T-cell (primary cell): ENCODE measurements at regions of chr15 and their contacts with region 1.

Region 1: DNA sequence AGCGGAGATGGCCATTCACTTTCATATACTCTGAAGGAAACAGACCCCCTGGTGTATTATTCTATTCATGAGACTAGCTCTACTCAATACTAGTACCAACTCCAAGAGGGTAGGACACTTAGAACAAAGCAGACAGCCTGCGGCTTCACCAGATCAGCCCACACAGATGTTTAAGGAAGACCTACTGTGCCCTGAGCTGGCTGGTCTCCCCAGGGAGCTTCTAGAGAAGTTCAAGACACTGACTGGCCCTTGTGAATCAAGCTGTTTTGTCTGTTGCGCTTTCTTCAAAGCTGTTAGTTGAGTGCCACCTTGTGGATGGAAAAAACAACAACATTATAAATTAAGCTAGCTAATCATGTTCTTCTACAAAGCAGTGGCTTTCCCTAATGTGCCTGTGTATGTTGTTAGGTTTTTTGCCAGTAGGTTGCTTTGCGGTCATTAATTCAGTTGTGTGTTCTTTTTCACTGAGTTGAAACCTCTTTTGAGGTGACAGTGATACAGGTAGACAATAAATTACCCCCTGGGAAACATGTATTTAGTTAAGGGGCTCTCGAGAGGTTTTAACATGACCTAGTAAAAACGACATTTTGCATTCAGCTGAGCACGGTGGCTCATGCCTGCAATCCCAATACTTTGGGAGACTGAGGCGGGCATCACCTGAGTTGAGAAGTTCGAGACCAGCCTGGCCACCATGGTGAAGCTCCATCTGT is 64.2 kb upstream of the MYZAP start:
- DNase-seq: peak in 4 of 35 experiments; percentile 5 to 58 (median 10)
- ATAC-seq: no peak
- H3K4me3 ChIP-seq: no peak overlapping the region
- H3K4me3 Mint-ChIP-seq: no peak overlapping the region
- H3K27ac ChIP-seq: no peak overlapping the region
- H3K27ac Mint-ChIP-seq: no peak overlapping the region
- H3K4me1 ChIP-seq: no peaks in the 10 kb centered on the region
- H3K4me1 Mint-ChIP-seq: no peaks in the 10 kb centered on the region
- H3K27me3 ChIP-seq: peaks cover 0 to 15% of the 10 kb centered on the region in 2 experiments
- H3K27me3 Mint-ChIP-seq: peaks cover 5 to 15% of the 10 kb centered on the region in 2 donors

Region 2: GRCh38 chr15:56496635-56497034 is 1030.9 kb before region 1 on chr15:
- CTCF ChIA-PET with region 1: interaction called, 4 to 14 read pairs
- POLR2A ChIA-PET with region 1: no interaction called
- DNase-seq: peak in 2 of 35 experiments; percentile 12 to 66
- ATAC-seq: peak in 3 of 4 experiments; percentile 44 to 55 (median 45)
- H3K4me3 ChIP-seq: no peak overlapping the region
- H3K4me3 Mint-ChIP-seq: no peak overlapping the region
- H3K27ac ChIP-seq: no peak overlapping the region
- H3K27ac Mint-ChIP-seq: no peak overlapping the region
- H3K4me1 ChIP-seq: no peaks in the 10 kb centered on the region
- H3K4me1 Mint-ChIP-seq: peaks cover 0 to 3% (median 2%) of the 10 kb centered on the region in 3 donors
- H3K27me3 ChIP-seq: peaks cover 0 to 7% of the 10 kb centered on the region in 2 experiments
- H3K27me3 Mint-ChIP-seq: peaks cover 3 to 15% of the 10 kb centered on the region in 2 donors

Region 3: GRCh38 chr15:56719774-56720555 is 807.6 kb before region 1 on chr15:
- CTCF ChIA-PET with region 1: interaction called in 1 of 2 experiments, 10 read pairs
- POLR2A ChIA-PET with region 1: no interaction called
- DNase-seq: no peak
- ATAC-seq: no peak
- H3K4me3 ChIP-seq: no peak overlapping the region
- H3K4me3 Mint-ChIP-seq: peak overlapping the region in 1 of 3 donors; percentile 19
- H3K27ac ChIP-seq: no peak overlapping the region
- H3K27ac Mint-ChIP-seq: no peak overlapping the region
- H3K4me1 ChIP-seq: peaks cover 0 to 22% of the 10 kb centered on the region in 2 experiments
- H3K4me1 Mint-ChIP-seq: peaks cover 66 to 68% (median 67%) of the 10 kb centered on the region in 3 donors
- H3K27me3 ChIP-seq: no peaks in the 10 kb centered on the region
- H3K27me3 Mint-ChIP-seq: no peaks in the 10 kb centered on the region

Region 4: DNA sequence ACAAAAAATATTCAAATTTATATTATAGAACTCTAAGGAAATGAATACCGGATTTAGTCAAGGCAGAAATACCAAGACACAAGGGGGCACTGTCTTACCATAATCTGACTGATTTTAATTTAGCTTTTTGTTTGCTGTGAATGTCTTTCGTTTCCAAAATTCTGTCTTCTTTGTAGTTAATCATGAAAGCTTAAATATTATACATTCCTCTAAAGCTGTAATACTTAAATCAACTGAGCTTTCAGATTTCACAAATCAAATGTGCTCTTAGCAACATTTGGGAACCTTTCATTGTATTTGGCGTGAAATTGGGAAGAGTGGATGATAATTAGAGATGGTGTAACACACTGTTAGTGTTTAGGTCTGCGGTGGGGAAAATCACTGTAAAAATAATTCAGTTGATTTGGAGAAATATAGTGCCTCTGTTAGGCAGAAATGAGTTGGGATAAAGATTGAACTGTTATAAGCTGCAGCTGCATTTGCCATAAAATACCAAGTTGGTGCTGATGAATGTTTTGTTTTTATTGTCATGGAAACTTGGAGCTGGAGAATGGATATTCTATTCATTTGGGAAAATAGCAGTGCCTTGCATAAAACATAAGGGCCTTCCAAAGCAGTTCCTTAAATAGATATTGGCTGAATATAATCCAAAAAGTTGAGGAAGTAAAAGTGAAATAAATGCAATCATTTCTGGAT is 380.9 kb before region 1 on chr15:
- CTCF ChIA-PET with region 1: interaction called in 1 of 2 experiments, 10 read pairs
- POLR2A ChIA-PET with region 1: no interaction called
- DNase-seq: peak in 1 of 35 experiments; percentile 50
- ATAC-seq: no peak
- H3K4me3 ChIP-seq: no peak overlapping the region
- H3K4me3 Mint-ChIP-seq: no peak overlapping the region
- H3K27ac ChIP-seq: no peak overlapping the region
- H3K27ac Mint-ChIP-seq: no peak overlapping the region
- H3K4me1 ChIP-seq: no peaks in the 10 kb centered on the region
- H3K4me1 Mint-ChIP-seq: peaks cover 9 to 16% (median 15%) of the 10 kb centered on the region in 3 donors
- H3K27me3 ChIP-seq: no peaks in the 10 kb centered on the region
- H3K27me3 Mint-ChIP-seq: no peaks in the 10 kb centered on the region

Region 5: GRCh38 chr15:57340682-57341259 is 186.8 kb before region 1 on chr15:
- CTCF ChIA-PET with region 1: interaction called, 6 to 19 read pairs
- POLR2A ChIA-PET with region 1: no interaction called
- DNase-seq: peak in 8 of 35 experiments; percentile 4 to 53 (median 10)
- ATAC-seq: peak in 1 of 4 experiments; percentile 45
- H3K4me3 ChIP-seq: no peak overlapping the region
- H3K4me3 Mint-ChIP-seq: no peak overlapping the region
- H3K27ac ChIP-seq: no peak overlapping the region
- H3K27ac Mint-ChIP-seq: no peak overlapping the region
- H3K4me1 ChIP-seq: no peaks in the 10 kb centered on the region
- H3K4me1 Mint-ChIP-seq: no peaks in the 10 kb centered on the region
- H3K27me3 ChIP-seq: peaks cover 0 to 27% of the 10 kb centered on the region in 2 experiments
- H3K27me3 Mint-ChIP-seq: peaks cover 9 to 27% of the 10 kb centered on the region in 2 donors